ENCODE measurements at regions of chr11 and their contacts with region 1.

Region 1: GRCh38 chr11:113587308-113587739 is 112.1 kb upstream of the DRD2 start:
- DNase-seq: peak; percentile 47
- H3K4me3 Mint-ChIP-seq: peak overlapping the region; percentile 1
- H3K27ac Mint-ChIP-seq: peak overlapping the region; percentile 56
- H3K4me1 Mint-ChIP-seq: peaks cover 36% of the 10 kb centered on the region
- H3K27me3 Mint-ChIP-seq: no peaks in the 10 kb centered on the region

Region 2: DNA sequence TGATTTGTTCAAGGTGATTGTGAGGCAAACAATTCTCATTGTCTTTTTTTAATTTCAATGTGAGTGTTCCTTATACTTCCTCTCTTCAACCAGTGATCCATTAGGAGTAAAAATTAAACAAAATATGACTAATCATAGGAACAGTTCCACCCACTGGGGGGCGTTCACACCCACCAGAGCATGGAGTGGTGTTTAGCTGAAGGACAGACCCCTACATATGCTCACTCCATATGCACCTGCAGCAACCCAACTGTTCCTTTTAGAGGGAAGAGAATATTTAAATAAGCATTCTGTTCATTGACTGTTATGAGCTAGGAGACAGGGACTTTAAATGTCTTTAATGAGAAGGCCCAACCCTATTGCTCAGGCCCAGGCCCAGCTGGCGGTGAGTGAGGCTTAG is 33.4 kb before region 1 on chr11:
- intact Hi-C with region 1: loop called (anchors 2 kb)
- DNase-seq: no peak
- H3K4me3 Mint-ChIP-seq: no peak overlapping the region
- H3K27ac Mint-ChIP-seq: no peak overlapping the region
- H3K4me1 Mint-ChIP-seq: no peaks in the 10 kb centered on the region
- H3K27me3 Mint-ChIP-seq: peaks cover 9% of the 10 kb centered on the region

Region 3: DNA sequence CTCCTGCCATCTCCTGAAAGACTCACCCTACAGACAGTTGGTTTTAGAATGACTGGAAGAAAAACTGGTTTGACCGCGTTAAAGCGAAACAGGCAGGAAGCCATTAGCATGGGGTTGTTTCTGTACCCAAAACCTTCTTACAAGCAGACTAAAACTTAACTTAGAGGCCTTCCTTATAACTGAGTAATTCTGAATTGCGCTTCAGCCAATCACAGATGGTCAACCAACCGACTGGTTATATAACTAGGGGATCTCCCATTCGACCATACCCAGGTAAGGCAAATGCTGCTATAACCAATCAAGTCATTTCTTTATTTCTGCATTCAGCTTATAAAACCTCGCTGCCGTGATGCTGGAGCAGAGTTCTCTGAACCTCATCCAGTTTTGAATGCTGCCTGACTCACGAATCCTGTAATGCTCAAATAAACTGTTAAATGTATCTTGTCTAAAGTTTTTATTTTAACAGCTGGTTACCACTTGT is 24.3 kb before region 1 on chr11:
- intact Hi-C with region 1: loop called (anchors 1 kb)
- DNase-seq: no peak
- H3K4me3 Mint-ChIP-seq: no peak overlapping the region
- H3K27ac Mint-ChIP-seq: peak overlapping the region; percentile 24
- H3K4me1 Mint-ChIP-seq: peaks cover 14% of the 10 kb centered on the region
- H3K27me3 Mint-ChIP-seq: peaks cover 3% of the 10 kb centered on the region